ENCODE measurements at regions of chr5 and their contacts with region 1.

Region 1: GRCh38 chr5:43040287-43041098 is at the start of gene ANXA2R:
- DNase-seq: peak; percentile 98
- H3K4me3 ChIP-seq: peak within 1 kb of the TSS; percentile 70
- H3K27ac ChIP-seq: peak within 1 kb of the TSS; percentile 95
- H3K4me1 ChIP-seq: peaks cover 34% of the 10 kb centered on the region
- CTCF ChIP-seq: peak; percentile 77
- total RNA-seq, gene ANXA2R: 13.5 and 15.4 TPM in 2 replicates

Region 2: GRCh38 chr5:42908509-42909488 is 131.7 kb before region 1 on chr5:
- CTCF ChIA-PET with region 1: interaction called, 3 read pairs
- POLR2A ChIA-PET with region 1: interaction called, 6 read pairs
- intact Hi-C with region 1: loop called (anchors 1 kb)
- DNase-seq: peak; percentile 85
- H3K4me3 ChIP-seq: peak overlapping the region; percentile 20
- H3K27ac ChIP-seq: no peak overlapping the region
- H3K4me1 ChIP-seq: no peaks in the 10 kb centered on the region
- CTCF ChIP-seq: peak; percentile 76

Region 3: GRCh38 chr5:42994246-42995151 is 46.0 kb before region 1 on chr5:
- CTCF ChIA-PET with region 1: interaction called, 4 read pairs
- POLR2A ChIA-PET with region 1: interaction called, 18 read pairs
- intact Hi-C with region 1: loop called (anchors 1 kb)
- DNase-seq: peak; percentile 92
- H3K4me3 ChIP-seq: peak overlapping the region; percentile 79
- H3K27ac ChIP-seq: peak overlapping the region; percentile 63
- H3K4me1 ChIP-seq: peaks cover 30% of the 10 kb centered on the region
- CTCF ChIP-seq: peak; percentile 86

Region 4: GRCh38 chr5:43019614-43020293 is 20.7 kb before region 1 on chr5:
- CTCF ChIA-PET with region 1: interaction called, 7 read pairs
- POLR2A ChIA-PET with region 1: interaction called, 53 read pairs
- intact Hi-C with region 1: loop called (anchors 1 kb)
- DNase-seq: peak; percentile 95
- H3K4me3 ChIP-seq: peak overlapping the region; percentile 76
- H3K27ac ChIP-seq: peak overlapping the region; percentile 93
- H3K4me1 ChIP-seq: peaks cover 40% of the 10 kb centered on the region
- CTCF ChIP-seq: peak; percentile 73

Region 5: GRCh38 chr5:43073597-43074546 is 33.4 kb after region 1 on chr5:
- CTCF ChIA-PET with region 1: no interaction called
- POLR2A ChIA-PET with region 1: no interaction called
- intact Hi-C with region 1: no loop called
- DNase-seq: peak; percentile 59
- H3K4me3 ChIP-seq: no peak overlapping the region
- H3K27ac ChIP-seq: no peak overlapping the region
- H3K4me1 ChIP-seq: peaks cover 20% of the 10 kb centered on the region
- CTCF ChIP-seq: peak; percentile 85

Region 6: GRCh38 chr5:43105369-43106289 is 65.1 kb after region 1 on chr5:
- CTCF ChIA-PET with region 1: no interaction called
- POLR2A ChIA-PET with region 1: no interaction called
- intact Hi-C with region 1: loop called (anchors 1 kb)
- DNase-seq: peak; percentile 93
- H3K4me3 ChIP-seq: peak overlapping the region; percentile 65
- H3K27ac ChIP-seq: peak overlapping the region; percentile 20
- H3K4me1 ChIP-seq: peaks cover 4% of the 10 kb centered on the region
- CTCF ChIP-seq: peak; percentile 100

Region 7: GRCh38 chr5:43676083-43676840 is 635.8 kb after region 1 on chr5:
- CTCF ChIA-PET with region 1: no interaction called
- POLR2A ChIA-PET with region 1: no interaction called
- intact Hi-C with region 1: no loop called
- DNase-seq: no peak
- H3K4me3 ChIP-seq: no peak overlapping the region
- H3K27ac ChIP-seq: no peak overlapping the region
- H3K4me1 ChIP-seq: no peaks in the 10 kb centered on the region
- CTCF ChIP-seq: no peak

Measured in OCI-LY7 (cell line).